ENCODE measurements at regions of chr1 and their contacts with region 1.

Region 1: GRCh38 chr1:76154206-76154956 is 79.8 kb downstream of the ST6GALNAC3 start:
- DNase-seq: peak; percentile 77 to 85 (median 78)
- ATAC-seq: peak; percentile 97
- H3K4me3 ChIP-seq: no peak overlapping the region
- H3K4me1 ChIP-seq: peaks cover 4% of the 10 kb centered on the region
- CTCF ChIP-seq: peak; percentile 96

Region 2: DNA sequence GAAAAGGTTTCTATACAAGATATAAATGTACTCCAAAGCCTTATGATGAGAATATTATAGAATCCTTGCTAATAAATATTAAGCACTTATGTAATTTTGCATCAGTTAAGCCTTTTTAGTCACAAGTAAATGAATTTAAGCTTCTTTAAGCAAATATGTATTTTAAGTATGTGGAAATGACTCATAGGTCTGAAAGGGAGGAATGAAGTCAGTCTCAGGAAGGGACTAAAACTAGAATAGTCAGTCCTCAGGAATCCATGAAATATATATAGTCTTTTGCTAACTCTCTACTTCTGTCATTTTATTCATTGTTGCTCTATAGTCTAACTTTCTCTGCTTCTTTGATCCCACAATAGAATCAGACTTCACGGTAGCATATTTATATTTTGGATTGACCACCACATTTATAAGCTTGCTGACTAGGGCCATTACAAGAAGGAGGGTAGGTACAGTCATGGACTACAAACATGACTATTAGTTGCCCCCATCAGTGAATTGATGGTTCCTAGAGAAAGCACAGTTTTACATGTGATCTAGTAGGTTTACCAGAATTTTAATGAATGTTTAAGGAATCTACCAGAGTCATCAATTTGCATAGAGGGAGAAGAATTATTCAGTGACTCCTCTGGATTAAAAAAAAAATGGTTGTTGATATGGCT is 388.6 kb before region 1 on chr1:
- intact Hi-C with region 1: no loop called
- DNase-seq: no peak
- ATAC-seq: no peak
- H3K4me3 ChIP-seq: no peak overlapping the region
- H3K4me1 ChIP-seq: no peaks in the 10 kb centered on the region
- CTCF ChIP-seq: no peak

Region 3: DNA sequence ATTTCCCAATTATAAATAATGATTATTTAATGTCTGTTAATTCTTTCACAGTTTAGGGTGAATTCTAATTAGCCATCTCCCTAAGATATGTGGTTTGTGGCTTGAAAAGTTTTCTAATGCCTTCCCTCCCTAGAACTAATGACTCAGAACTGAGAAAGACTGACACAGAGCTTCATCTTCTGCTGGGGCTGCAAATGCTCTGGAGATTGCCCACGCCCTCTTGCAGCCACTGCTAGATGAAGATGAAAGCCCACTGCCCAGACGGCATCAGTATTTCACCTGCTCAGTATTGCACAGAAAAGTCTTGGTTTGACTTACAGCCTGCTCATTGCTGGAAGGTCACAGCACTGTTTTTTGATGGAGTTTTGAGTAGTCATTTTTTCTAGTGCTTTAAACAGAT is 21.6 kb after region 1 on chr1:
- intact Hi-C with region 1: no loop called
- DNase-seq: no peak
- ATAC-seq: no peak
- H3K4me3 ChIP-seq: no peak overlapping the region
- H3K4me1 ChIP-seq: no peaks in the 10 kb centered on the region
- CTCF ChIP-seq: no peak

Region 4: GRCh38 chr1:77126307-77126706 is 971.9 kb after region 1 on chr1:
- intact Hi-C with region 1: loop called in 1 of 2 experiments (anchors 5 kb)
- DNase-seq: peak in 1 of 3 donors; percentile 33
- ATAC-seq: peak; percentile 34
- H3K4me3 ChIP-seq: no peak overlapping the region
- H3K4me1 ChIP-seq: no peaks in the 10 kb centered on the region
- CTCF ChIP-seq: no peak

Region 5: GRCh38 chr1:77533660-77534305 is 1379.4 kb after region 1 on chr1:
- intact Hi-C with region 1: loop called in 1 of 2 experiments (anchors 10 kb)
- DNase-seq: peak in 2 of 3 donors; percentile 23 to 42
- ATAC-seq: peak; percentile 76
- H3K4me3 ChIP-seq: no peak overlapping the region
- H3K4me1 ChIP-seq: no peaks in the 10 kb centered on the region
- CTCF ChIP-seq: peak; percentile 53

Measured in mucosa of descending colon (tissue), 3 donors.